Caco-2 (cell line): ENCODE measurements at regions of chr17 and their contacts with region 1.

Region 1: GRCh38 chr17:49031965-49032928 is 35.1 kb downstream of the IGF2BP1 start:
- DNase-seq: peak; percentile 92 to 93
- H3K4me3 ChIP-seq: no peak overlapping the region
- H3K4me3 Mint-ChIP-seq: peak overlapping the region; percentile 0
- H3K27ac Mint-ChIP-seq: peak overlapping the region; percentile 34
- H3K4me1 ChIP-seq: peaks cover 21% of the 10 kb centered on the region
- H3K4me1 Mint-ChIP-seq: peaks cover 52% of the 10 kb centered on the region
- H3K27me3 ChIP-seq: no peaks in the 10 kb centered on the region
- H3K27me3 Mint-ChIP-seq: no peaks in the 10 kb centered on the region
- CTCF ChIP-seq: peak; percentile 98 to 99

Region 2: DNA sequence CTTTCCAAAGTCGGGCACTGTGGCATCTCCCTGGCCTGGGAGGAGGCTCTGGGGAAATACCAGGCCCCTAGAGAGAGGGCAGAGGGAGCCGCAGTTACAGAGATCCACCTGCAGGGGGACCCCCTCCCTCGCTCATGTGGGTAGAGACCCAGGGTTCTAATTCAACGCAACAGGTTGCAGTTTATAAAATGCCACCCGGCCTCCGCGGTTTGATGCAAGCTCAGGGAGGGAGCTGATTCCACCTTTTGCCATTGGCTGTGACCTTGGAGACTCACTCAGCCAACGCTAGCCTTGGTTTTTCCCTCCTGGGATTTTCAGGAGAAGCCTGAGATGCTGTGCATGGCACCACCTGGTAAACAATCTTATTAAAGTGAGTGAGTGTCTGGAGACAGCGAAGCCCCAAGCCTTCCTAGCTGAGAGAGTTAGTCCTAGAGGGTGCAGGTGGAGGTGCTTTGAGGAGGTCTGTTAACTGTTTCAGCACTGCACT is 227.3 kb before region 1 on chr17:
- CTCF ChIA-PET with region 1: interaction called, 6 read pairs
- POLR2A ChIA-PET with region 1: no interaction called
- intact Hi-C with region 1: loop called (anchors 2 kb)
- DNase-seq: peak; percentile 86 to 95
- H3K4me3 ChIP-seq: no peak overlapping the region
- H3K4me3 Mint-ChIP-seq: no peak overlapping the region
- H3K27ac Mint-ChIP-seq: no peak overlapping the region
- H3K4me1 ChIP-seq: peaks cover 15% of the 10 kb centered on the region
- H3K4me1 Mint-ChIP-seq: peaks cover 17% of the 10 kb centered on the region
- H3K27me3 ChIP-seq: no peaks in the 10 kb centered on the region
- H3K27me3 Mint-ChIP-seq: no peaks in the 10 kb centered on the region
- CTCF ChIP-seq: peak; percentile 100

Region 3: GRCh38 chr17:48871551-48872351 is 160.5 kb before region 1 on chr17:
- CTCF ChIA-PET with region 1: no interaction called
- POLR2A ChIA-PET with region 1: no interaction called
- intact Hi-C with region 1: no loop called
- DNase-seq: peak; percentile 98 to 99
- H3K4me3 ChIP-seq: no peak overlapping the region
- H3K4me3 Mint-ChIP-seq: peak overlapping the region; percentile 50
- H3K27ac Mint-ChIP-seq: peak overlapping the region; percentile 85
- H3K4me1 ChIP-seq: peaks cover 54% of the 10 kb centered on the region
- H3K4me1 Mint-ChIP-seq: peaks cover 66% of the 10 kb centered on the region
- H3K27me3 ChIP-seq: no peaks in the 10 kb centered on the region
- H3K27me3 Mint-ChIP-seq: no peaks in the 10 kb centered on the region
- CTCF ChIP-seq: no peak

Region 4: DNA sequence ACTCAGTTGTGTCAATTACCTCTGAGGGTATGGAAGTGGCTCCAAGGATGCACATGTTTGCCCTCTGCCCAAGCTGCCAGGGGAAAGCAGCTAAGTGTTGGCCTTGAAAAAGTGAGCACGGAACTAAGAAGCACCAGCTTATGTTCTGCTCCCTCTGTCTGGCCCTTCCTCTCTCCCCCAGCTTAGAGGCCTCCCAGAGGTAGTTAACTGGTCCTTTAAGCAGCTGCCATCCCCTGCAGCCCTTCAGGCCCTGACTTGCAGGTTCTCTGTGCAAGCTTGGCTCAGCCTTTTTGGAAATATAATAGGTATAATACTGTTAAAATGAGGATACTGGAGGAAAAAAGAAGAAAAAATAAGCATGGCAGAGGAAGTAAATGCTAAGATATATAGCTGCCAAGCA is 131.0 kb before region 1 on chr17:
- CTCF ChIA-PET with region 1: interaction called, 12 read pairs
- POLR2A ChIA-PET with region 1: no interaction called
- intact Hi-C with region 1: no loop called
- DNase-seq: no peak
- H3K4me3 ChIP-seq: no peak overlapping the region
- H3K4me3 Mint-ChIP-seq: no peak overlapping the region
- H3K27ac Mint-ChIP-seq: no peak overlapping the region
- H3K4me1 ChIP-seq: peaks cover 3% of the 10 kb centered on the region
- H3K4me1 Mint-ChIP-seq: peaks cover 13% of the 10 kb centered on the region
- H3K27me3 ChIP-seq: no peaks in the 10 kb centered on the region
- H3K27me3 Mint-ChIP-seq: no peaks in the 10 kb centered on the region
- CTCF ChIP-seq: no peak

Region 5: DNA sequence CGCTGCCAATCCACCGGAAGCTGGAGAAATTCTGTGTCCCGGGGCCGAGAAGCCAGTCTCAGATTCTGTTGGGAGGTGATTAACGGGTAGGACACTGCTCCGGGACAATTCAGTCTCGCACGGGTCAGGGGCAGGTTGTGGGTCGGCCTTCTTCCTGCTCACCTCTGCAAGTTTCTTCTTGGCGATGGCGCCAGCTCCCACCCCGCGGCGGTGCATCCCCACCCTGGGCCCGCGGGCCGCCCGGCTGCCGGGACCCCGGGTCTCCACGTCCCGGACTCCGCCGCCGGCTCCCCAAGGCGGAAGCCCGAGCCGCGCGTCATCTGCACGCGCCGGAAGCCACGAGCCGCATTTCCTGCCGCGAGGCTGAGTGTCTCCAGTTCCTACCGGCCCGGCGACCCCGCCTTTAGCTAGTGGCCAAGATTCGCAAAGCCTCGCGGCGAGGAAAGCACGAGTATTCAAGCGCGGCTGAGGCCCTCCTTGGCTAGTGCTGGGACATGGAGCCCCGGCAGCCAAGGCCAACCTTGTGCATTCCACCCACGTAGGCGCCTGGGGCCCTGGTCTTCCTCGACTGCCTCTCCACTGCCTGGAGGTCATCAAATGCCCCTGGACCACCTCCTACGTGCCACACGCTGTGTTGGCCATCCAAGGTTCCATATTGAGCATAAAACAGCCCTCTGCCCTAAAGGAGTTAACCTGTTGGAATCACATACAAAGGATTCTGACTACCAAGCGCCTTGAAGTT is 87.6 kb before region 1 on chr17 and contains the start of gene SNF8:
- CTCF ChIA-PET with region 1: interaction called, 28 read pairs
- POLR2A ChIA-PET with region 1: interaction called, 16 read pairs
- intact Hi-C with region 1: loop called (anchors 1 kb)
- DNase-seq: peak; percentile 99 to 100
- H3K4me3 ChIP-seq: peak within 1 kb of the TSS; percentile 85
- H3K4me3 Mint-ChIP-seq: peak within 1 kb of the TSS; percentile 95
- H3K27ac Mint-ChIP-seq: peak within 1 kb of the TSS; percentile 95
- H3K4me1 ChIP-seq: peaks cover 9% of the 10 kb centered on the region
- H3K4me1 Mint-ChIP-seq: no peaks in the 10 kb centered on the region
- H3K27me3 ChIP-seq: no peaks in the 10 kb centered on the region
- H3K27me3 Mint-ChIP-seq: no peaks in the 10 kb centered on the region
- CTCF ChIP-seq: no peak
- total RNA-seq, gene SNF8: 457 and 461 TPM in 2 replicates

Region 6: DNA sequence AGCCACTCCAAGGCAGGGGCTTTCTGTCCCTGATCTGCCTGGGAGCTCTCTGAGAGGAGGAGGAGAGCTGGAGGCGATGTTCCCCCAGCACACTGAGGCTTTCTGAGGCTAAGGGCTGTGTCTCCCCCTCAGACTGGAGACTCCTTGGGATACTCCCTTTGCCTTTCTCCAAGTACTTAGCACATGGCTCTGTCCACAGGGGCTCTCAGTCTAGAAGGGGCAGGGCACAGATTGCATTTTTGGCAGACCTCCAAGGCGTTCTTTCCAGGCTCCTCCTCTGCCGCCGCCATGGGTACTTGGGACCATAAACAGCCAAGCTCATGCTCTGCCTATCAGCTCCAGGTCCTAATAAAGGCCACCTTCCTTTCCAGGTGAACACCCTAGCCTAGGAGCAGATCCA is 62.0 kb before region 1 on chr17:
- CTCF ChIA-PET with region 1: interaction called, 26 read pairs
- POLR2A ChIA-PET with region 1: interaction called, 3 read pairs
- intact Hi-C with region 1: no loop called
- DNase-seq: peak in 1 of 2 experiments; percentile 43
- H3K4me3 ChIP-seq: no peak overlapping the region
- H3K4me3 Mint-ChIP-seq: no peak overlapping the region
- H3K27ac Mint-ChIP-seq: peak overlapping the region; percentile 97
- H3K4me1 ChIP-seq: peaks cover 38% of the 10 kb centered on the region
- H3K4me1 Mint-ChIP-seq: peaks cover 46% of the 10 kb centered on the region
- H3K27me3 ChIP-seq: no peaks in the 10 kb centered on the region
- H3K27me3 Mint-ChIP-seq: no peaks in the 10 kb centered on the region
- CTCF ChIP-seq: no peak

Region 7: GRCh38 chr17:49016788-49017463 is 15.3 kb before region 1 on chr17:
- CTCF ChIA-PET with region 1: interaction called, 17 read pairs
- POLR2A ChIA-PET with region 1: interaction called, 6 read pairs
- intact Hi-C with region 1: no loop called
- DNase-seq: peak in 1 of 2 experiments; percentile 40
- H3K4me3 ChIP-seq: no peak overlapping the region
- H3K4me3 Mint-ChIP-seq: peak overlapping the region; percentile 37
- H3K27ac Mint-ChIP-seq: peak overlapping the region; percentile 85
- H3K4me1 ChIP-seq: peaks cover 86% of the 10 kb centered on the region
- H3K4me1 Mint-ChIP-seq: peaks cover 73% of the 10 kb centered on the region
- H3K27me3 ChIP-seq: no peaks in the 10 kb centered on the region
- H3K27me3 Mint-ChIP-seq: no peaks in the 10 kb centered on the region
- CTCF ChIP-seq: no peak

Region 8: DNA sequence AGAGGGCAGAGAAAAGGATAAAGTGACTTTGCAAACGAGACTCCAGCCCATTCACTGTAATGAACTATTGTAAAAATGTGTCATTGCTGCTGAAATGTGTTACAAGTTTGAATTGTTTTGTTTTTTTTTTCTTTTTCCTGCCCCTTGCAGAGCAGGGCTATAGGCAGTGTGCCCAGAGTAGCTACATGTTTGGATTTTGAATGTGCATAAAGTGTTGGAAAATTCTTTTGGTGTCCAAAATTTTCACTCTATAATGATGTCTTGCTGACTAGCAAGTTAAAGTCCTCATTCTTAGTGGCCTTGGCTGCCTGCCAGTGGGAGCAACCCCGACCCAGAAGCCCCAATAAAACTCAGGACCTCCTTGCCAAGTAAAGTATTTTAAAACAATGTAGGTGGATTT is 31.4 kb after region 1 on chr17:
- CTCF ChIA-PET with region 1: no interaction called
- POLR2A ChIA-PET with region 1: no interaction called
- intact Hi-C with region 1: no loop called
- DNase-seq: no peak
- H3K4me3 ChIP-seq: no peak overlapping the region
- H3K4me3 Mint-ChIP-seq: no peak overlapping the region
- H3K27ac Mint-ChIP-seq: no peak overlapping the region
- H3K4me1 ChIP-seq: peaks cover 20% of the 10 kb centered on the region
- H3K4me1 Mint-ChIP-seq: peaks cover 14% of the 10 kb centered on the region
- H3K27me3 ChIP-seq: no peaks in the 10 kb centered on the region
- H3K27me3 Mint-ChIP-seq: no peaks in the 10 kb centered on the region
- CTCF ChIP-seq: no peak

Region 9: GRCh38 chr17:49086649-49087048 is 54.4 kb after region 1 on chr17:
- CTCF ChIA-PET with region 1: no interaction called
- POLR2A ChIA-PET with region 1: no interaction called
- intact Hi-C with region 1: no loop called
- DNase-seq: no peak
- H3K4me3 ChIP-seq: no peak overlapping the region
- H3K4me3 Mint-ChIP-seq: no peak overlapping the region
- H3K27ac Mint-ChIP-seq: peak overlapping the region; percentile 41
- H3K4me1 ChIP-seq: 0 out of 2 replicates have a peak, but pooled peaks cover 4% of the 10 kb centered on the region
- H3K4me1 Mint-ChIP-seq: peaks cover 17% of the 10 kb centered on the region
- H3K27me3 ChIP-seq: no peaks in the 10 kb centered on the region
- H3K27me3 Mint-ChIP-seq: no peaks in the 10 kb centered on the region
- CTCF ChIP-seq: no peak

Region 10: DNA sequence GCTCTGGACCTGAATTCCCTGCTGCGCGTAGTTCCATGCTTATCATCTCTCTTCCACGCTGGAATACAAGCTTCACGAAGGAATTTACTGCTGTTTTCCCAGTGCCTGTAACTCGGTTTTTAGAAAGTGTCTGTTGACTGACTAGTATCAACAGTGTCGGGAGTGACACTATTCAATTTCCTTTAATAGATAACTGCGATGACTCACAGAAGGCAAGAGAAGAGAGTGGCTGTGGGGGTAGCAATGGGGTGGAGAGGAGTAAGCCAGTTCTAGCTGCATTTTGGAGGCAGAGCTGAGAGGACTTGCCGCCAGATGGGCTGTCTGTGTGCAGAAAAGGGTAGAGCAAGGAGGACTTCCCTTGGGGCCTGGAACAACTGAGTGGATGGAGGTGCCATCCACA is 125.5 kb after region 1 on chr17:
- CTCF ChIA-PET with region 1: no interaction called
- POLR2A ChIA-PET with region 1: no interaction called
- intact Hi-C with region 1: no loop called
- DNase-seq: peak in 1 of 2 experiments; percentile 38
- H3K4me3 ChIP-seq: no peak overlapping the region
- H3K4me3 Mint-ChIP-seq: peak overlapping the region; percentile 3
- H3K27ac Mint-ChIP-seq: no peak overlapping the region
- H3K4me1 ChIP-seq: peaks cover 13% of the 10 kb centered on the region
- H3K4me1 Mint-ChIP-seq: peaks cover 15% of the 10 kb centered on the region
- H3K27me3 ChIP-seq: no peaks in the 10 kb centered on the region
- H3K27me3 Mint-ChIP-seq: no peaks in the 10 kb centered on the region
- CTCF ChIP-seq: no peak